ENCODE measurements at regions of chr19 and their contacts with region 1.

Region 1: DNA sequence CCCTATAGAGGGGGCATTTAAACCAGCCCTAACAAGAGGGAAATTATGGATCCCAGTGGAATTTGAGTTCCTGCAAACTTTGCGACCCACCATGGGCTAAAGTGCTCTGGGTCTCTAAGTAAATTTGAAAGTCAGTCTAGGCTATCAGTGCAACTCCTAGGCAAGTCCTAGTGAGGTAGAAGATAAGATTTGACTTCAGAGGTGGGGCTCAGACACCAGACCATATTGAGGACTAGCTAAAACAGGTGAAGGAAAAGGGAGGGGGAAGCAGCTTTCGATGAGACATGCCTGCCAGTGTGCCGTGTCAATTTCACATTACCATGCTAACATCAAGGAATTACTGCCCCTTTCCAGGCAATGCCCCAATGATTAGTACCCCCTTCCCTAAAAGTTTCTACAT is 38.4 kb downstream of the CD320 start:
- DNase-seq: no peak
- H3K4me3 ChIP-seq: no peak overlapping the region
- H3K27ac ChIP-seq: no peak overlapping the region
- H3K4me1 ChIP-seq: no peaks in the 10 kb centered on the region
- H3K27me3 ChIP-seq: no peaks in the 10 kb centered on the region
- CTCF ChIP-seq: no peak

Region 2: DNA sequence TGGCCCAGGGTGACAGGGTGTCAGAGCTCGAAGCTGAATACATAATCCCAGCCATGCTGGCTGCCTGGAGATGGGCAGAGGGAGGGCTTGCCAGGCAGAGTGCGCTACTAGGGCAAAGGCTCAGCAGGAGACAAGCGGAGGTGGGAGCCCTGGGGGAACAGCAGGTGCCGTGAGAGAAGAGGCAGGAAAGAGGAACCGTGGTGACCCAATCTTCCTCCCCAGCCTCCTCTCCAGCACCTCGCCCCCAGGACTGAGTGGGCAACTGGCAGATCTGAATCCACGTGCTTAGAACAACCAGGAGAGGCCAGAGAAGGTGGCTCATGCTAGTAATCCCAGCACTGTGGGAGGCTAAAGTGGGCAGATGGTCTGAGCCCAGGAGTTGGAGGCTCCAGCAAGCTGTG is 228.2 kb before region 1 on chr19:
- CTCF ChIA-PET with region 1: no interaction called
- dilution Hi-C with region 1: no loop called
- in situ Hi-C with region 1: no loop called
- intact Hi-C with region 1: no loop called
- DNase-seq: no peak
- H3K4me3 ChIP-seq: no peak overlapping the region
- H3K27ac ChIP-seq: no peak overlapping the region
- H3K4me1 ChIP-seq: no peaks in the 10 kb centered on the region
- H3K27me3 ChIP-seq: no peaks in the 10 kb centered on the region
- CTCF ChIP-seq: no peak

Region 3: DNA sequence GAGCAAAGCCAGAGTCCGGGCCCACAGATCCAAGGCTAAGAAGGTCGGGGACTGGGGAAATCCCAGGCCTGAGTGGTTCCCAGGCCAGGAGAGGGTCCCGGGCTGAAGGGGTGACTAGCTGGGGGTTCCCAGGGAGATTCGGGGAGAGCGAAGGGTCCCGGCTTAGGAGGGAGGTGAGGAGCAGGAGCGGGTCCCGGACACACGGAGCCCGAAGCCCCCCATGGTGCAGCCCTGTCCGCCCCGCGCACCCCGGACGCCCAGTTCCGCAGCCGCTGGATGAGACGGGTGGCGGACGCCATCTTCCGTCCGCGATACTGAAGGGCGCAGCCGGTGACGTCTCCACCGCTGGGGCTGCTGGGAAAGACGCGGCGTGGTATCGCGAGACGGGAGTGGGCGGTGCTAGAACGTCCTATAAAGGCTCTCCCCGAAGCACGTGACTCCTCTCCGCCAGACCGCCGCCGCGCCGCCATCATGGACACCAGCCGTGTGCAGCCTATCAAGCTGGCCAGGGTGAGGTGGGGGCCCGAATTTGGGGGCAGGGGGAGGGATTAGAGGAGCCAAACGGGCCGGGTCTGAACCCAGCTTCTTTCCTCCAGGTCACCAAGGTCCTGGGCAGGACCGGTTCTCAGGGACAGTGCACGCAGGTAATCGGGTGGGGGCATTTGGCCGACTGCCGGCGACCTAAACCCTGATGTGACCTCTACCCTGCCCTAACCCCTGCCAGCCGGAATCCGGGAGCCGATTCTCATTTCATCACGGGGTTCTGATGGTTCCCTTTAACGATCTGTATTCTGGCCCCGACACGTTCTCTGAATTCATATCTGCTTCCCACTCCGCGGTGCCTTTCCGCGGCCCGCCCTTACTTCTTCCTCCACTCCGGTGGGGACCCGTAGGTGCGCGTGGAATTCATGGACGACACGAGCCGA is 51.6 kb after region 1 on chr19 and contains the starts of genes NDUFA7 and RPS28:
- CTCF ChIA-PET with region 1: no interaction called
- dilution Hi-C with region 1: no loop called
- in situ Hi-C with region 1: no loop called
- intact Hi-C with region 1: loop called (anchors 5 kb)
- DNase-seq: peak; percentile 91
- H3K4me3 ChIP-seq: peak within 1 kb of the TSS; percentile 86 to 100 (median 94)
- H3K27ac ChIP-seq: peak within 1 kb of the TSS; percentile 93
- H3K4me1 ChIP-seq: peaks cover 27% of the 10 kb centered on the region
- H3K27me3 ChIP-seq: no peaks in the 10 kb centered on the region
- CTCF ChIP-seq: peak in 1 of 2 donors; percentile 34
- total RNA-seq, gene NDUFA7: 5.3 to 77.6 TPM
- total RNA-seq, gene RPS28: 151 to 1,577 TPM

Region 4: DNA sequence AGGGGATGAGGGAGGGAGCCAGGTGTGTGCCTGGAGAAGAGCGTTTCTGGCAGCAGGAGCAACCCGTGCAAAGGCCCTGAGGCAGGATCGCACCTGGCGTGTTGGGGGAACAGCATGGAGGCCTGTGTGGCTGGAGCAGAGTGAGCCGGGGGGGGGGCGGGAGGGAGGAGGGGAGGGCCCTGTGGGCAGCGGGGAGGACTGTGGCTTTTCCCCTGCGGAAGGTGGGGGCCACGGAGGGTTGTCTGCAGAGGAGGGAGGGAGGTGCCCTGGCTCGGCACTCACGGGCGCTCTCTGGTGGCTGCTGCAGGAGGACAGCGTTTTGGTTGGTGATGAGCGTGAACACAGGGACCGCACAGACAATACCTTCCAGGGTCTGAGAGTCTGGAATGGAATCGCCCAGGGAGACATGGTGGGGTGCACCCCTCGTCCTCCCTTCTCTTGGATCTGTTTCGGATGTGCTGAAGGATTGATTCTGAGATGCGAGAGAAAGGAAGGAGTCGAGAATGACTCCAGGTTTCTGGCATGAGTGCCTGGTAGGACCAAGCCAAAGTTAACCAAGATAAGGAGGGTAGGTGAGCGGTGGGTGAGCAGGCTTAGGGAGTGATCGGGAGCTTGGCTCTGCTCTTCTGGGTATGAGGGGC is 127.0 kb after region 1 on chr19:
- CTCF ChIA-PET with region 1: no interaction called
- dilution Hi-C with region 1: no loop called
- in situ Hi-C with region 1: no loop called
- intact Hi-C with region 1: loop called (anchors 5 kb)
- DNase-seq: peak; percentile 55
- H3K4me3 ChIP-seq: no peak overlapping the region
- H3K27ac ChIP-seq: peak overlapping the region; percentile 42
- H3K4me1 ChIP-seq: peaks cover 45% of the 10 kb centered on the region
- H3K27me3 ChIP-seq: no peaks in the 10 kb centered on the region
- CTCF ChIP-seq: peak; percentile 73 to 85

Region 5: GRCh38 chr19:8580710-8581281 is 311.1 kb after region 1 on chr19:
- CTCF ChIA-PET with region 1: no interaction called
- dilution Hi-C with region 1: no loop called
- in situ Hi-C with region 1: no loop called
- intact Hi-C with region 1: loop called (anchors 5 kb)
- DNase-seq: peak; percentile 42
- H3K4me3 ChIP-seq: no peak overlapping the region
- H3K27ac ChIP-seq: no peak overlapping the region
- H3K4me1 ChIP-seq: no peaks in the 10 kb centered on the region
- H3K27me3 ChIP-seq: no peaks in the 10 kb centered on the region
- CTCF ChIP-seq: peak; percentile 97 to 99

Measured in mammary epithelial cell (primary cell).